Activated CD8-positive, alpha-beta T cell treated with anti-CD3 and anti-CD28 coated beads for 36 hours (primary cell): ENCODE measurements at regions of chr7 and their contacts with region 1.

Region 1: DNA sequence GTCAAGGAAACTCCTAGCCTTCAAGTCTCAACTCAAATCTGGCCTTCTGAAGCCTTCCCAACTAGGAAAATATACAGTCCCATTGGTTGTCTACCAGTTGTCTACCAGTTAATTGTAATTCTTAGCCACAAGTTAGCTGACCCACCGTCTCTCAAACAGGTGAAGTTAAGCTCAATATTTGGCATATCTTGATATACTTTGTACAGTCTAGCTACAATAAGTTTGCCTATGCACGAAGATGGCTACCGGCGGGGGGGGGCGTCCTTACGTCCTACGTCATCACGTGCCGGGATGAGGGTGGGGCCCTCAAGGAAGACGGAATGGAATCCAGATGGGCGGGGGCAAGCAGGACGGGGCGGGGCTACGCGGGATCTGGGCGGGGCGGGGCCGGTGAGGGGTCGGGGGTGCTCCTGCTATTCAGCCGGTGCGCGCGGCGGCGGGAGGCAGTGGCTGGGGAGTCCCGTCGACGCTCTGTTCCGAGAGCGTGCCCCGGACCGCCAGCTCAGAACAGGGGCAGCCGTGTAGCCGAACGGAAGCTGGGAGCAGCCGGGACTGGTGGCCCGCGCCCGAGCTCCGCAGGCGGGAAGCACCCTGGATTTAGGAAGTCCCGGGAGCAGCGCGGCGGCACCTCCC is at the start of gene AHR:
- DNase-seq: peak; percentile 97
- ATAC-seq: peak; percentile 88
- H3K4me3 Mint-ChIP-seq: peak within 1 kb of the TSS; percentile 91
- H3K27ac Mint-ChIP-seq: peak within 1 kb of the TSS; percentile 94
- H3K4me1 Mint-ChIP-seq: peaks cover 28% of the 10 kb centered on the region
- H3K27me3 Mint-ChIP-seq: no peaks in the 10 kb centered on the region
- CTCF ChIP-seq: no peak
- total RNA-seq, gene AHR: 32.1 to 33.4 TPM

Region 2: DNA sequence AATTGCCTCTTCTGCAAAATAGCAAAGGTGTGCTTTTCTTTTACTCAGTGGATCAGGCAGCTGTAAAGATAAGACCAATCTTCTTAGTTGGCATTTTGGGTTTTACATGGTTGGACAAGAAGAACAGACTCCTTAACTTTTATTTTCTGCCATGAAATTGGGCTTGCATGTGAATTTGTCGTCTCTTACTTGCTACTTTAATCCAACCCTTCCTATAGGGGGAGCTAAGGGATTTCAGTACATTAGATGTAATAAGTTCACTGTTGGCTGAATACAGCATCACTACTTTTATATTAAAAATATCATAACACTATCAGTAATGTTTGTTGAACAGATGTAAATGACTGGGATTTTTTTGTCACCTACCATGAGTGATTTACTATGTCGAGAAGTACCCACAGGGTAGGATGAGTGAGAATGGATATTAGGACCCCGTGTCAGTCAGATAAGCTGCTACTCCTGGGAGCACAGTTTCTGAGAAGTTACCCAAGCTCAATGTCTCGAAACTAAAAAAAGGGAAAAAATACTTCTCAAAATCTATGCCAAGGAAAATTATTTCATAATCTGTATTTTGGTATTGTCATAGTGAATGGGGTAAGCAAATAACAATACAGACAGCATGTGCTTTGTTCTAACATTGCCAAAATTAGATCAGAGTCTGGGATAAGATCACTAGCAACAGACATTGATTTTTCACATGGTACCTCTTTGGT is 289.2 kb before region 1 on chr7:
- CTCF ChIA-PET with region 1: interaction called, 4 read pairs
- POLR2A ChIA-PET with region 1: no interaction called
- intact Hi-C with region 1: loop called (anchors 10 kb)
- DNase-seq: no peak
- ATAC-seq: peak; percentile 39
- H3K4me3 Mint-ChIP-seq: no peak overlapping the region
- H3K27ac Mint-ChIP-seq: no peak overlapping the region
- H3K4me1 Mint-ChIP-seq: peaks cover 16% of the 10 kb centered on the region
- H3K27me3 Mint-ChIP-seq: peaks cover 5% of the 10 kb centered on the region
- CTCF ChIP-seq: peak; percentile 38

Region 3: GRCh38 chr7:17139081-17139480 is 159.2 kb before region 1 on chr7:
- CTCF ChIA-PET with region 1: interaction called, 7 read pairs
- POLR2A ChIA-PET with region 1: interaction called, 7 read pairs
- intact Hi-C with region 1: loop called (anchors 2 kb)
- DNase-seq: no peak
- ATAC-seq: peak; percentile 87
- H3K4me3 Mint-ChIP-seq: peak overlapping the region; percentile 23
- H3K27ac Mint-ChIP-seq: peak overlapping the region; percentile 92
- H3K4me1 Mint-ChIP-seq: peaks cover 74% of the 10 kb centered on the region
- H3K27me3 Mint-ChIP-seq: no peaks in the 10 kb centered on the region
- CTCF ChIP-seq: no peak

Region 4: GRCh38 chr7:17234398-17235031 is 63.8 kb before region 1 on chr7:
- CTCF ChIA-PET with region 1: interaction called, 4 read pairs
- POLR2A ChIA-PET with region 1: interaction called, 9 read pairs
- intact Hi-C with region 1: loop called (anchors 2 kb)
- DNase-seq: peak; percentile 87
- ATAC-seq: peak; percentile 85
- H3K4me3 Mint-ChIP-seq: peak overlapping the region; percentile 65
- H3K27ac Mint-ChIP-seq: peak overlapping the region; percentile 97
- H3K4me1 Mint-ChIP-seq: peaks cover 45% of the 10 kb centered on the region
- H3K27me3 Mint-ChIP-seq: no peaks in the 10 kb centered on the region
- CTCF ChIP-seq: no peak

Region 5: GRCh38 chr7:17255926-17256325 is 42.4 kb before region 1 on chr7:
- CTCF ChIA-PET with region 1: no interaction called
- POLR2A ChIA-PET with region 1: interaction called, 8 read pairs
- intact Hi-C with region 1: loop called (anchors 1 kb)
- DNase-seq: no peak
- ATAC-seq: no peak
- H3K4me3 Mint-ChIP-seq: no peak overlapping the region
- H3K27ac Mint-ChIP-seq: no peak overlapping the region
- H3K4me1 Mint-ChIP-seq: peaks cover 9% of the 10 kb centered on the region
- H3K27me3 Mint-ChIP-seq: no peaks in the 10 kb centered on the region
- CTCF ChIP-seq: no peak

Region 6: DNA sequence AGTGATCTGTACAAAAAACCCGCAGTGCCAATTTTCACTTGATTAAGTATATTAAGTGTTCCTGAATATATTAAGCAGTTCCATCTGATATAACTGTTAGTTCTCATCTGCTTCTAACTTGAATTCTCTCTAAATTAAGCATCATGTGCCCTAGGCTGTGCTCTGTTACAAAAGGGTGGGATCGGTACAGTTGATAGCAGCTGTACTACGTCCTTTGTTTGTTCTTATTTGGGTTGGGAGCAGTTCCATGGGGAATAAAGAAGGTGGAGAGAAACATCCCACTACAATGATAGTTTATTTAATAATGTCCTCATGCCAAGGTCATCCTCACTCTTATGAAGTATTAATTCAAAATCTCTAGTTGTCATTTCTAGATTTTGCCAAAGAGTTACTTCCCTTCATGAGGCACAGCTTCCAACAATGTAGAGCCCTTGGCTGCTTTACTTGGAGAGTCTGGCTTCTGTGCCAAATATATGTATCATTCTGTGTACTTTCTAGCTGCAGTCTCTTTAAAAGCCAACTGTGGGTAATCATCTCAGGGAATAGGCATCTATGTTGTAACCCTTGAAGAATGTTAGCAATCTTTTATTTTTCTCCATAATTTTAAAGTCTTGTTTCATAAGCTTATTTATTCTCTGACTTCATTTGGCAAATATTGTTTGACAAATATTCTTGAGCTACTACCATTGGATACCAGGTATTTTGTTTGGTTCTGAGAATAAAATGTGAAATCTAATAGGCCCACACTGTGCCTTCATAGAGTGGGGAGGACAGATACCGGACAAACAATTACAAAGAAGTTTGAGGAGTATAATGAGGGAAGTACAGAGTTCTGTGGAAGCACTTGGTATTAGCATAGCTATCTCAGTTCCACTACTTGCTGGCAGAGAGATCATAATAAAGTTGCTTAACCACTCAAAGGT is 22.3 kb before region 1 on chr7:
- CTCF ChIA-PET with region 1: interaction called, 12 read pairs
- POLR2A ChIA-PET with region 1: interaction called, 3 read pairs
- intact Hi-C with region 1: no loop called
- DNase-seq: no peak
- ATAC-seq: no peak
- H3K4me3 Mint-ChIP-seq: no peak overlapping the region
- H3K27ac Mint-ChIP-seq: no peak overlapping the region
- H3K4me1 Mint-ChIP-seq: peaks cover 21% of the 10 kb centered on the region
- H3K27me3 Mint-ChIP-seq: no peaks in the 10 kb centered on the region
- CTCF ChIP-seq: no peak

Region 7: GRCh38 chr7:17434841-17435692 is 136.7 kb after region 1 on chr7:
- CTCF ChIA-PET with region 1: no interaction called
- POLR2A ChIA-PET with region 1: no interaction called
- intact Hi-C with region 1: loop called (anchors 10 kb)
- DNase-seq: no peak
- ATAC-seq: no peak
- H3K4me3 Mint-ChIP-seq: no peak overlapping the region
- H3K27ac Mint-ChIP-seq: no peak overlapping the region
- H3K4me1 Mint-ChIP-seq: peaks cover 13% of the 10 kb centered on the region
- H3K27me3 Mint-ChIP-seq: peaks cover 2% of the 10 kb centered on the region
- CTCF ChIP-seq: no peak